Endothelial cell of umbilical vein (primary cell): ENCODE measurements at regions of chr9 and their contacts with region 1.

Region 1: GRCh38 chr9:84851935-84852585 is 182.5 kb downstream of the NTRK2 start:
- DNase-seq: peak; percentile 96
- H3K4me3 ChIP-seq: no peak overlapping the region
- H3K27ac ChIP-seq: peak overlapping the region; percentile 60
- H3K4me1 ChIP-seq: peaks cover 20% of the 10 kb centered on the region
- H3K27me3 ChIP-seq: no peaks in the 10 kb centered on the region
- CTCF ChIP-seq: no peak
- POLR2A ChIP-seq: peak; percentile 19

Region 2: DNA sequence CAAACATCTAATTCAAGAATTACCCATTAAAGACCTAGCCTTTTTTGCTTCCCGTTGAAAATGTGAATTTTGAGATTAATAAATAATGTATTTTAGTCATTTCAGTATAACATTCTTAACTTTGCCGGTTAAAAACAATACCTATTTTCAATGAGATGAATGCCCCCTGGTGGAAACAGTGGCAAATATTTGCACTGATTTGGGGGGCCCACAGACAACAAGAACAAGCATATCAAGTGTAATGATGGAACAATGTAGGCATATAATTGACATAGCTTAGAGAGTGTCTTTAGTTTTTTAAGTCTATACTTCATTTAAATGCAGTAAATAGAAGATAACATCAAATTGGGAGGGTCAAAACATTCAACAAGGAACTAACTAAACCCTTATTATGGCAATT is 70.6 kb before region 1 on chr9:
- CTCF ChIA-PET with region 1: no interaction called
- POLR2A ChIA-PET with region 1: no interaction called
- dilution Hi-C with region 1: no loop called
- intact Hi-C with region 1: loop called (anchors 5 kb)
- DNase-seq: peak; percentile 33
- H3K4me3 ChIP-seq: no peak overlapping the region
- H3K27ac ChIP-seq: no peak overlapping the region
- H3K4me1 ChIP-seq: peaks cover 7% of the 10 kb centered on the region
- H3K27me3 ChIP-seq: no peaks in the 10 kb centered on the region
- CTCF ChIP-seq: peak; percentile 30
- POLR2A ChIP-seq: no peak

Region 3: DNA sequence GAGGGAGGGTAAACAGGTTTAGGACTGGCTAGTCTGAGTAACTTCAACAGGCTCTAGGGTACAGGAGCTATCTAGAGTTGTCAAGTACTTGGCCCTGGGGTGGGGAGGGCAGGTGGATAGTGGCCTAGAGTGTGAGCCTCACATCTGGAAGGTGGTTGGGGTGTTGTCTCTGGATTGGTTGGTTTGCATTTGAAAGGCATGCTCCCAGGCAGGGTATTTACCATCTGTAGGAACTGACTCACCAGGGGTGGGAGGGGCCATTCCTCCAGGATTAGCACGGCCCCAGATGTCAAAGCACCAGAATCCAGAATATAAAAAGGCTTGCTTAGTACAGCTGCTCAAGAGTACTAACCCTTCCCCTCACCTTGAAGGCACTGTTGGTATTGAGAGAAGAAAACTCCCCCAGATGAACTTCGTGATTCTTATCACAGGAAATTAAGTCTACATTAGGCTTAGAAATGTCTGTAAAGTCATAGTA is 10.8 kb after region 1 on chr9:
- CTCF ChIA-PET with region 1: interaction called, 6 read pairs
- POLR2A ChIA-PET with region 1: no interaction called
- dilution Hi-C with region 1: no loop called
- intact Hi-C with region 1: loop called (anchors 1 kb)
- DNase-seq: peak; percentile 90
- H3K4me3 ChIP-seq: no peak overlapping the region
- H3K27ac ChIP-seq: peak overlapping the region; percentile 70
- H3K4me1 ChIP-seq: peaks cover 21% of the 10 kb centered on the region
- H3K27me3 ChIP-seq: no peaks in the 10 kb centered on the region
- CTCF ChIP-seq: no peak
- POLR2A ChIP-seq: no peak

Region 4: GRCh38 chr9:84940294-84940693 is 88.2 kb after region 1 on chr9:
- CTCF ChIA-PET with region 1: no interaction called
- POLR2A ChIA-PET with region 1: no interaction called
- dilution Hi-C with region 1: no loop called
- intact Hi-C with region 1: loop called (anchors 5 kb)
- DNase-seq: no peak
- H3K4me3 ChIP-seq: no peak overlapping the region
- H3K27ac ChIP-seq: no peak overlapping the region
- H3K4me1 ChIP-seq: no peaks in the 10 kb centered on the region
- H3K27me3 ChIP-seq: no peaks in the 10 kb centered on the region
- CTCF ChIP-seq: no peak
- POLR2A ChIP-seq: no peak